T-cell (primary cell): ENCODE measurements at regions of chr6 and their contacts with region 1.

Region 1: DNA sequence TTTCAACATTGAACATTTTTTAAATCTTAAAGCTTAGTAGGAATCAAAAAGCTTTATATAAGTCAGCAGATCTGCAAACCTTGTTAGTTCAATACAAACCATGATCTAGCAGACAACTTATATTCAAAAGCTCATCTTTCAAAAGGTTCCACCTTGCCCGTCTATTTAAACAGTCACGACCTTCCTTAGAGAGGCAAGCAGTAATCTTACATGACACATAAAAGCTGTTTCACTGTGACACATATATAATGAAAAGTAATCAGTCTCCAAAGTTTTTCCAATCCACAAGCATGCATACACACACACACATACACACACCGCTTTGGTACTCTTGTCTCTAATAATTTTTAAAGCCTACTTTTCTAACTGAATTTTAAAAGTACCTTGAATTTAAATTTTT is 12.9 kb downstream of the SOD2 start:
- DNase-seq: no peak
- ATAC-seq: no peak
- H3K4me3 ChIP-seq: no peak overlapping the region
- H3K4me3 Mint-ChIP-seq: no peak overlapping the region
- H3K27ac ChIP-seq: no peak overlapping the region
- H3K27ac Mint-ChIP-seq: peak overlapping the region in 1 of 2 donors; percentile 53
- H3K4me1 ChIP-seq: no peaks in the 10 kb centered on the region
- H3K4me1 Mint-ChIP-seq: peaks cover 5 to 20% (median 17%) of the 10 kb centered on the region in 3 donors
- H3K27me3 ChIP-seq: no peaks in the 10 kb centered on the region
- H3K27me3 Mint-ChIP-seq: no peaks in the 10 kb centered on the region

Region 2: GRCh38 chr6:159645640-159646039 is 34.5 kb before region 1 on chr6:
- CTCF ChIA-PET with region 1: no interaction called
- POLR2A ChIA-PET with region 1: no interaction called
- DNase-seq: no peak
- ATAC-seq: no peak
- H3K4me3 ChIP-seq: no peak overlapping the region
- H3K4me3 Mint-ChIP-seq: no peak overlapping the region
- H3K27ac ChIP-seq: no peak overlapping the region
- H3K27ac Mint-ChIP-seq: no peak overlapping the region
- H3K4me1 ChIP-seq: no peaks in the 10 kb centered on the region
- H3K4me1 Mint-ChIP-seq: peaks cover 0 to 9% (median 0%) of the 10 kb centered on the region in 3 donors
- H3K27me3 ChIP-seq: no peaks in the 10 kb centered on the region
- H3K27me3 Mint-ChIP-seq: no peaks in the 10 kb centered on the region

Region 3: GRCh38 chr6:159701411-159701999 is 21.4 kb after region 1 on chr6:
- CTCF ChIA-PET with region 1: no interaction called
- POLR2A ChIA-PET with region 1: interaction called in 1 of 2 experiments, 10 read pairs
- DNase-seq: no peak
- ATAC-seq: no peak
- H3K4me3 ChIP-seq: no peak overlapping the region
- H3K4me3 Mint-ChIP-seq: no peak overlapping the region
- H3K27ac ChIP-seq: no peak overlapping the region
- H3K27ac Mint-ChIP-seq: no peak overlapping the region
- H3K4me1 ChIP-seq: no peaks in the 10 kb centered on the region
- H3K4me1 Mint-ChIP-seq: peaks cover 0 to 2% (median 2%) of the 10 kb centered on the region in 3 donors
- H3K27me3 ChIP-seq: no peaks in the 10 kb centered on the region
- H3K27me3 Mint-ChIP-seq: no peaks in the 10 kb centered on the region

Region 4: GRCh38 chr6:159790149-159790955 is 110.2 kb after region 1 on chr6 and contains the start of gene MRPL18:
- CTCF ChIA-PET with region 1: no interaction called
- POLR2A ChIA-PET with region 1: no interaction called
- DNase-seq: peak; percentile 69 to 94 (median 86)
- ATAC-seq: peak; percentile 84 to 88 (median 86)
- H3K4me3 ChIP-seq: peak within 1 kb of the TSS; percentile 96
- H3K4me3 Mint-ChIP-seq: peak within 1 kb of the TSS; percentile 96 to 99 (median 98)
- H3K27ac ChIP-seq: peak within 1 kb of the TSS; percentile 96
- H3K27ac Mint-ChIP-seq: peak within 1 kb of the TSS; percentile 97 to 99
- H3K4me1 ChIP-seq: peaks cover 25 to 31% of the 10 kb centered on the region in 2 experiments
- H3K4me1 Mint-ChIP-seq: peaks cover 58 to 69% (median 63%) of the 10 kb centered on the region in 3 donors
- H3K27me3 ChIP-seq: no peaks in the 10 kb centered on the region
- H3K27me3 Mint-ChIP-seq: no peaks in the 10 kb centered on the region
- total RNA-seq, gene MRPL18: 19.8 to 44.4 (median 36.6) TPM